B cell (primary cell): ENCODE measurements at regions of chr19 and their contacts with region 1.

Region 1: GRCh38 chr19:3618144-3618810 is 8.3 kb downstream of the CACTIN start:
- DNase-seq: peak; percentile 65
- ATAC-seq: peak; percentile 79
- H3K4me3 ChIP-seq: no peak overlapping the region
- H3K4me3 Mint-ChIP-seq: no peak overlapping the region
- H3K27ac ChIP-seq: no peak overlapping the region
- H3K27ac Mint-ChIP-seq: no peak overlapping the region
- H3K4me1 ChIP-seq: peaks cover 12 to 15% of the 10 kb centered on the region in 2 donors
- H3K4me1 Mint-ChIP-seq: peaks cover 13% of the 10 kb centered on the region
- H3K27me3 ChIP-seq: no peaks in the 10 kb centered on the region
- H3K27me3 Mint-ChIP-seq: no peaks in the 10 kb centered on the region
- CTCF ChIP-seq: peak; percentile 78

Region 2: DNA sequence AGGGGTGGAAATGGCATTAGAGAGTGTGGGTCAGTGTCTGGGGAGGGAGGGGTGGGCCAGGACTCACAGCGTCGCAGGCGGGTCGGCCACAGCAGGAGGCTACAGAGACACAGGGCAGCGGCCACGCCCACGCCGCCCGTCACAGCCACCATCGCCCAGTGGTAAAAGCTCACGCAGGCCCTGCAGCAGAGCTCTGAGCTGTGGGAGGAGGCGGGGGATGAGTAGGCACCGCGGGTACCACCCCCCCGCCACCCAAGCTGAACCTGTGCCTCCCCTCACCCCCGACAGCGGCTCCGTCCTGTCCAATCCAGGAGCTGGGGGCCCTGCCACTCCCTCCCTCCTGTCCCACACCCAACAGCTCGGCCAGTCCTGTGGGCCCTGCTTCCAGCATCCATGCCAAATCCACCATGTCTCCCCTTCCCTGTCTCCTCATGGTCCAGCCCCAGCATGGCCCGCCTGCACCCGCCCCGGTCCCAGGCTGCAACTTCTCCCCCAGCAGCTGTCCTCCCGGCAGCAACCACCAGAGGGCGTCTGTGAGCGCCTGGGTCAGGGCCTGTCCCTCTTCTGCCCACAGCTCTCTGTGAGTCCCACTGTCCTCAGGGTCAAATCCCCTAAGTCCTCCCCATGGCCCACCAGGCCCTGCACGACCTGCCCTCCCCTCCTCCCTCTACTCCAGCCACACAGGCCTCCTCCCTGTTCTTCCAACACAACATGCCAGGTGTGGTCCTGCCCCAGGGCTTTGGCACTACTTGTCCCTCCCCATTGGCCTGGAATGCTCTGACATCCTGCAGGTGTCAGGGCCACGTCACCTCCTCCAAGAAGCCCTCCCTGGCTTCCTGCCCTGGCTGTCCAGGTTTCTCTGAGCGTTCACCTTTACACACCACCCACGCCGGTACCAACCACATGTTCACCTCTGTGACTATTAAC is 73.3 kb before region 1 on chr19:
- CTCF ChIA-PET with region 1: interaction called, 47 read pairs
- POLR2A ChIA-PET with region 1: no interaction called
- intact Hi-C with region 1: loop called (anchors 1 kb)
- DNase-seq: peak; percentile 78
- ATAC-seq: peak; percentile 78
- H3K4me3 ChIP-seq: no peak overlapping the region
- H3K4me3 Mint-ChIP-seq: no peak overlapping the region
- H3K27ac ChIP-seq: no peak overlapping the region
- H3K27ac Mint-ChIP-seq: peak overlapping the region; percentile 86
- H3K4me1 ChIP-seq: no peaks in the 10 kb centered on the region
- H3K4me1 Mint-ChIP-seq: peaks cover 8% of the 10 kb centered on the region
- H3K27me3 ChIP-seq: no peaks in the 10 kb centered on the region
- H3K27me3 Mint-ChIP-seq: no peaks in the 10 kb centered on the region
- CTCF ChIP-seq: peak; percentile 90

Region 3: DNA sequence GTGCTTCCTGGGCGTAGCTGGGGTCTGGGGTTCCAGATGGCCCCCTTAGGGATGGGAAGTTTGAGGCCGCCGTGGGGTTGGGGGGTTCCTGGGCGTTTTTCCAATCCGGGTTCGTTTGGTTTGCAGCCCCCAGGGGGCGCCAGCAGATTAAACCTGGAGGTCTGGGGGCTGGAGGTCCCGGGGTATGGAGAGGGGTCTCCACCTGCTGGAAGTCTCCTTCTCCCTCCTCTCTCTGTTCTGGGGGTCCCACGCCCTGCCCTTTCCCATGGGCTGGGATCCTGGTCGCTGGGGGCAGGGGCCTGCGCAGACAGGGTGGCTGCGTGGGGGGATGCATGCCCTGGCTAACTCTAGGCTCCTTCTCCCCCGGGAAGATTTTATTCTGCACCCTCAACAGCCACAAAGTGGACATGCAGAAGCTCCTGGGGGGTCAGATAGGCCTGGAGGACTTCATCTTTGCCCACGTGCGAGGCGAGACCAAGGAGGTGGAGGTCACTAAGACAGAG is 32.1 kb before region 1 on chr19:
- CTCF ChIA-PET with region 1: interaction called, 7 read pairs
- POLR2A ChIA-PET with region 1: no interaction called
- intact Hi-C with region 1: loop called (anchors 1 kb)
- DNase-seq: peak; percentile 60
- ATAC-seq: peak; percentile 36
- H3K4me3 ChIP-seq: peak overlapping the region in 4 of 5 experiments; percentile 37 to 51 (median 42)
- H3K4me3 Mint-ChIP-seq: peak overlapping the region; percentile 66
- H3K27ac ChIP-seq: no peak overlapping the region
- H3K27ac Mint-ChIP-seq: no peak overlapping the region
- H3K4me1 ChIP-seq: peaks cover 8 to 12% of the 10 kb centered on the region in 2 donors
- H3K4me1 Mint-ChIP-seq: no peaks in the 10 kb centered on the region
- H3K27me3 ChIP-seq: peaks cover 0 to 13% (median 6%) of the 10 kb centered on the region in 4 experiments
- H3K27me3 Mint-ChIP-seq: no peaks in the 10 kb centered on the region
- CTCF ChIP-seq: peak; percentile 69